ENCODE measurements at regions of chr5 and their contacts with region 1.

Region 1: GRCh38 chr5:131994533-131995226 is 16.8 kb downstream of the ACSL6 start:
- DNase-seq: peak in 1 of 5 donors; percentile 29
- ATAC-seq: no peak
- H3K4me3 ChIP-seq: no peak overlapping the region
- H3K27ac ChIP-seq: no peak overlapping the region
- H3K4me1 ChIP-seq: no peaks in the 10 kb centered on the region
- H3K27me3 ChIP-seq: no peaks in the 10 kb centered on the region
- CTCF ChIP-seq: no peak
- POLR2A ChIP-seq: no peak

Region 2: DNA sequence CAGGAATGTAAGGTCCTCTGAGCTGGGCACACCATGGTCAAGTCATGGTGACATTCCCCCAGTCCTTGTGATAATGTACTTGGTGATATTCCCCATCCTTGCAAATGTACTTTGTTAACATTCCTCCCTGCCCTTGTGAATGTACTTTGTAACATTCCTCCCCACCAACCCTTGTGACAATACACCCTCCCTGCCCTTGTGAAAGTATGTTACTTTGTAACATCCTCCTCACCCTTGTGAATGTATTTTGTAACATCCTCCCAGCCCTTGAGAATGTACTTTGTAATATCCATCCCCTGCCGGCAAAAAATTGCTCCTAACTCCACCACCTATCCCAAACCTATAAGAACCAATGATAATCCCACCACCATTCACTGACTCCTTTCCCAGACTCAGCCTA is 413.0 kb before region 1 on chr5:
- intact Hi-C with region 1: loop called in 1 of 10 experiments (anchors 5 kb)
- DNase-seq: no peak
- ATAC-seq: peak in 1 of 4 donors; percentile 52
- H3K4me3 ChIP-seq: no peak overlapping the region
- H3K27ac ChIP-seq: no peak overlapping the region
- H3K4me1 ChIP-seq: peaks cover 0 to 9% (median 0%) of the 10 kb centered on the region in 12 donors
- H3K27me3 ChIP-seq: no peaks in the 10 kb centered on the region
- CTCF ChIP-seq: no peak
- POLR2A ChIP-seq: no peak

Region 3: GRCh38 chr5:131821221-131821620 is 173.5 kb before region 1 on chr5:
- intact Hi-C with region 1: loop called in 1 of 10 experiments (anchors 5 kb)
- DNase-seq: no peak
- ATAC-seq: no peak
- H3K4me3 ChIP-seq: no peak overlapping the region
- H3K27ac ChIP-seq: no peak overlapping the region
- H3K4me1 ChIP-seq: no peaks in the 10 kb centered on the region
- H3K27me3 ChIP-seq: peaks cover 0 to 4% (median 0%) of the 10 kb centered on the region in 9 donors
- CTCF ChIP-seq: no peak
- POLR2A ChIP-seq: no peak

Region 4: DNA sequence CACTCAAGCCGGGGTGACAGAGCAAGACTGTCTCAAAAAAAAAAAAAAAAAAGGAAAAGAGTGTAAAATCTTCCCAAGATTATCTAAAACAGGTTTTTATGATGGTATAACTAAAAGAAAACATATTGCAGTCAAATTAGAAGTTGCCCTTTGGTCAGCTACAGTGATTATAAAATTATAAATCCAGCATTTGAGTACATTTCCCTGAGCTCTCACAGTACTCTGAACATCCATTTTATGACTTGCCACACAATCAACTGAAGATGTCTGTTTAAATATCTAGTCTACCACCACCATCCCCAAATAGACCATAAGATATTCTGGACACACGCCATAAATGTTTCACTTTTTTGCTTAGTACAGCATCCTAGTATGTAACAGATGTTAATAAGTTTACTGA is 155.9 kb after region 1 on chr5:
- intact Hi-C with region 1: no loop called
- DNase-seq: no peak
- ATAC-seq: no peak
- H3K4me3 ChIP-seq: no peak overlapping the region
- H3K27ac ChIP-seq: no peak overlapping the region
- H3K4me1 ChIP-seq: no peaks in the 10 kb centered on the region
- H3K27me3 ChIP-seq: no peaks in the 10 kb centered on the region
- CTCF ChIP-seq: no peak
- POLR2A ChIP-seq: no peak